Activated T-helper 1 cell treated with anti-CD3 and anti-CD28 coated beads, Interleukin-12 subunit alpha, Interleukin-12 subunit beta, Interleukin-2, Interleukin-4 antibody, amounts not matched to agents 30 ng/mL and 10 ng/mL and 1 ng/mL, durations not matched to agents 14 hours and 24 hours and 36 hours (primary cell): ENCODE measurements at regions of chr7 and their contacts with region 1.

Region 1: DNA sequence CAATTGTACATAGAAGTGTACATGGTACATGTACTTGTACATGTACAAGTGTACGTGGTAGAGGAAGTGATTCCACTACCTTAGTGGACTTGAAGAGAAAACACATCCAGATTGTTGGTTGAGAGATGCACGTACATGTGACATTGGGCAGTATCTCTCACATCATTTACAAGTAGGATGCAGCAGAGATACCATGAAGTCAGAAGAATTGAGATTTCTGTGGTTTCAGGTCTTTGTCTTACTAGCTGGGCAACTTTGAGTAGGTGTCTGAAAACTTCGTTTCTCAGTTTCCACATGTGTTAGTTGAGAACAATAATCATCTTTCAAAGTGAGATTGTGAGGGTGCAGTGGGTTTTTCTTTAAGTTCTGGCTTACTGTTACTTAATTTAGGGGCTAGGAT is 21.5 kb downstream of the CLDN12 start:
- DNase-seq: no peak
- H3K4me3 Mint-ChIP-seq: peak overlapping the region; percentile 32
- H3K27ac Mint-ChIP-seq: peak overlapping the region; percentile 65
- H3K4me1 Mint-ChIP-seq: peaks cover 21% of the 10 kb centered on the region
- H3K27me3 Mint-ChIP-seq: no peaks in the 10 kb centered on the region

Region 2: GRCh38 chr7:88546808-88547207 is 1877.9 kb before region 1 on chr7:
- intact Hi-C with region 1: loop called (anchors 5 kb)
- DNase-seq: peak; percentile 3
- H3K4me3 Mint-ChIP-seq: no peak overlapping the region
- H3K27ac Mint-ChIP-seq: no peak overlapping the region
- H3K4me1 Mint-ChIP-seq: no peaks in the 10 kb centered on the region
- H3K27me3 Mint-ChIP-seq: no peaks in the 10 kb centered on the region

Region 3: GRCh38 chr7:89607792-89608191 is 816.9 kb before region 1 on chr7:
- intact Hi-C with region 1: loop called (anchors 10 kb)
- DNase-seq: peak; percentile 35
- H3K4me3 Mint-ChIP-seq: peak overlapping the region; percentile 70
- H3K27ac Mint-ChIP-seq: peak overlapping the region; percentile 98
- H3K4me1 Mint-ChIP-seq: peaks cover 47% of the 10 kb centered on the region
- H3K27me3 Mint-ChIP-seq: peaks cover 3% of the 10 kb centered on the region

Region 4: DNA sequence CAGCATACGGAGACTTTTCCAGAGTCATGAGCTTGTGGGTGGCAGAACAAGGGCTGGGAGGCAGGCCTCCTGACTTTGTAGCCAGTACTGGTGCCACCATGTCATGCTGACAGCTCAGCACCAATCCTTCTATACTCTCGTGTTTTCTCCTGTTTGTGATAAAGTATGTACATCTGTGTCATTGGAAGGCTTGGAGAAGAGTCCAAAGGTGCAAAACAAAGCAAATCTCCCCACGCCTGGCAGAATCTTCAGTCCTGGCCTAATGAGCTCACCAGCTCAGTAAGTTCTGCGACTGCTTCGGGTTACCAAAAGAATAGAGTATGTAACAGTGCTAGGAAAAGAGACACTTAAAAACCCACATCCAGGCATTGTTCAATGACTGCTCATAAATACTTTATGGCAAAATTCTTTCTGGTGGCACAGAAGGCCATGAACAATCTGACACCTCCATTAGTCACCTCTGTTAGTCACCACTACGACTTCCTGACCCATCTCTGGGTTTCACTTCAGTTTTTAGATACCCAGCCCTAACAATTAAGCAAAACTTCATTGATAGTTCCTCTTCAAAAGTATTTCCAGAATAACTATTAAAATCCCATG is 245.9 kb before region 1 on chr7:
- intact Hi-C with region 1: loop called (anchors 1 kb)
- DNase-seq: peak; percentile 14
- H3K4me3 Mint-ChIP-seq: peak overlapping the region; percentile 51
- H3K27ac Mint-ChIP-seq: peak overlapping the region; percentile 93
- H3K4me1 Mint-ChIP-seq: peaks cover 29% of the 10 kb centered on the region
- H3K27me3 Mint-ChIP-seq: no peaks in the 10 kb centered on the region

Region 5: DNA sequence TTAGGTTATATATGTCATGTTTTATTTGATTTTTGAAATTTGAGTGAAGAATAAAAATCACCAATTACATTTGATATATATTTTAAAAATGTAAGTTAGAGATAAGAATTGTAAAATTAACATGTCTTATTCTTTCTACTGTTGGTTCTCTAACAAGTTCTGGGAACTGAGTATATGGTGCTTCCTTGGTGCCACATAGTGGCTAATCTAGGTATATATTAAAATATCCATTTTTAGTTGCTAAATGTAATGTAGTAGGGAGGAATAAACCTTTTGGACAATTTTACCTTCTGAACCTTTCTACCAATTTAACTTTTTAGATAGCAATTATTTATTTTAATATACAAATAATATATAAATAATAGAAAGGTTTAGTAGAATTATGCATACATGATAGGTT is 162.3 kb before region 1 on chr7:
- intact Hi-C with region 1: loop called (anchors 1 kb)
- DNase-seq: no peak
- H3K4me3 Mint-ChIP-seq: no peak overlapping the region
- H3K27ac Mint-ChIP-seq: no peak overlapping the region
- H3K4me1 Mint-ChIP-seq: no peaks in the 10 kb centered on the region
- H3K27me3 Mint-ChIP-seq: peaks cover 11% of the 10 kb centered on the region

Region 6: GRCh38 chr7:90312745-90313144 is 112.0 kb before region 1 on chr7:
- intact Hi-C with region 1: loop called (anchors 1 kb)
- DNase-seq: no peak
- H3K4me3 Mint-ChIP-seq: no peak overlapping the region
- H3K27ac Mint-ChIP-seq: no peak overlapping the region
- H3K4me1 Mint-ChIP-seq: no peaks in the 10 kb centered on the region
- H3K27me3 Mint-ChIP-seq: peaks cover 2% of the 10 kb centered on the region

Region 7: DNA sequence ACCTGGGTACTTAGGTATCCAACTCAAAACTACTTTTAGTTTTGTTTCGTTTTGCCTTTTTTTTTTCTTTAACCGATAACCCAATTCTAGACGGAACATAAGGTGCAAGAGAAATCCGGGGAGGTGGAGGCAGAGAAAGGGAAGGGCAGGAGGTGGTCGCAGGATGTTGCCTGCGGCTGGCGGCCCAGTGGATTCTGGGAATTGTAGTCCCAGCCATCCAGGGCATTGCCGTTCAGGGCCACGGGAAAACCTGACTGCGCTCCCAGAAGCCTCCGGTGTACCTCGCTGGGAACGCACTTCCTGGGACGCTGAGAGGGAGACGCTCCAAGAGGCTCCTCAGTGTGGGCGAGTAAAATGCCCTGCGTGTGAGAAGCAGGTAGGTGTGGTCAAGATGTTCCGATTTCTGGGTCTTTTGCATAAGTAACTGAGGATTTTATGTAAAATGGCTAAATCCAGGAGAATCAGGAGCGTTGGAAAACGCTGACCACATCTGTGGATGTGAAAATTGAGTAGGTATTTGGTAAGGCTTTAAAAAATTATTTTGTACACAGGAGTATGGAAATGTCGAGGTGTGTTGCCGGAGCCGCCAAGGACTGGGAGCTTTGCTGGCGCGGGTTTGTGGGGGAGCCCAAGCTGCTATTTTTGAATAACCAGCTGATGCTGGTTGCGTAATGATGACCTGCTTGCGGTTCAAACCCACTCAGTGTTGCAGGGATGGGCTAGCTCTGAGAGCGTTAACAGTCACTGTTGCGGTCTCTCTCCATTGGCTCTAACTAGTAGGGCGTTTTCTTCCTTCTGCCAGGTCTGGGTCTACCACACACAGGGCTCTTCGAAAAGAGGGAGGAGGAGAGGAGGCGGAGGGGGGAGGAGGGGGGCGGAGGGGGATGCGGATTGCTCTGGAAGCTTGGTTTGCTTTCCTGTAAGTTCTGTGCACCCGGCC is 21.3 kb before region 1 on chr7 and contains the start of gene CLDN12:
- intact Hi-C with region 1: loop called (anchors 1 kb)
- DNase-seq: peak; percentile 75
- H3K4me3 Mint-ChIP-seq: peak within 1 kb of the TSS; percentile 88
- H3K27ac Mint-ChIP-seq: peak within 1 kb of the TSS; percentile 86
- H3K4me1 Mint-ChIP-seq: peaks cover 28% of the 10 kb centered on the region
- H3K27me3 Mint-ChIP-seq: peaks cover 10% of the 10 kb centered on the region
- total RNA-seq, gene CLDN12: 4.4 and 6.2 TPM in 2 replicates

Region 8: DNA sequence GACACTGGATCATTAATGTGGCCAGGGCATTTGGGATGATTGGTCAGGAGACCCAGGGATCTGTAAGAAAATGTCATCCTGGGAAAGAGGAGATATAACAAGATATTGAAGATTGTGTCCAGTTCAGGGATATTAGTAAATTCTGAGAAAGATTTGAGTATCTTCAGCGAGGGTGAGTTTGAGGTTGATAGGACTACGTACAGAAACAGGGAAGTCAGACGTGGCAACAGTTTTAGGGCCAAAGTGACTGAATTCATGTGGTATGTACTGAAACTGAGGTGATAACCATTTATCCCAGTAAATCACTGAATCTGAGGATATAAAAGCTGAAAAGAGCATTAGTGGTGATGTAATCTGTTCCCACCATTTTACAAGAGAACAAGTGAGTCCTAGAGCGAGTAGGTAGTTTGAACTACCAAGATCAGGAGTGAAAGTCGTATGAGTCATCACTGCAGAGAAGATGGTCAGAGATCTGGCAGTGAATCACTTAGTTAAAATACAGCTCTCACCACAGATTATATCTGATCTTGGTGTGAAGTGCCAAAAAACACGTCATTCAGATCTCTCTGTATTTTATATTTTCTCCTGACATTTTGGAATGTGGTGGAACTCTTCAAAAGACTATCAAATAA is 391.9 kb after region 1 on chr7:
- intact Hi-C with region 1: no loop called
- DNase-seq: no peak
- H3K4me3 Mint-ChIP-seq: no peak overlapping the region
- H3K27ac Mint-ChIP-seq: peak overlapping the region; percentile 20
- H3K4me1 Mint-ChIP-seq: peaks cover 6% of the 10 kb centered on the region
- H3K27me3 Mint-ChIP-seq: peaks cover 5% of the 10 kb centered on the region

Region 9: DNA sequence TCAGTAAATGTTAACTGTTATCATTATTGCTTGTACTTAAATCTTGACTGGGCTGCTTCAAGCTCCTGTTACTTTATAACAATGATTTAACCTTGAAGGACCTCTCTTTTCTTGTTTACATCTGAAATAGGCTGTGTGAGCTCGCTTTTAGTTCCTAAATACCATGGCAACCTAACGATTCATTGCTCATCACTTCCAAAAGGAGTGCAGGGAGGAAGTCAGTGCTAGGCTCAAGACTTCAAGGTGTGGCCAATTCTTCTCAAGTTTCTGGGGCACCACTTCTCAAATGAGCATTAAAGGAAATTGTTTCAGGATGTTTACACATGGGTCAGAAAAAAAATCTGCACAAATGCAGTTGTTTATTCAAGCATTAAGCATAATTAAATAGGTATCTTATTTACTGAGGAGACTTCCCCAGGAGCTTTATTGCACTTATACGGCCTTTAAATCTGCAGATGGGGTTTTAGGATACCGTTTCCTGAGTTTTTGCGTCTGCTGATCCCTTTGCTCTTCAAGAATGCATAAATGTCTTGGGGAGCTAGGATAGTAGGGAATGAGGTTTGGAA is 1171.7 kb after region 1 on chr7:
- intact Hi-C with region 1: no loop called
- DNase-seq: no peak
- H3K4me3 Mint-ChIP-seq: no peak overlapping the region
- H3K27ac Mint-ChIP-seq: no peak overlapping the region
- H3K4me1 Mint-ChIP-seq: no peaks in the 10 kb centered on the region
- H3K27me3 Mint-ChIP-seq: peaks cover 3% of the 10 kb centered on the region